PC-3 (cell line): ENCODE measurements at regions of chr20 and their contacts with region 1.

Region 1: GRCh38 chr20:8043687-8044282 is 24.2 kb upstream of the TMX4 start:
- DNase-seq: peak; percentile 88
- ATAC-seq: peak; percentile 81
- H3K4me3 ChIP-seq: no peak overlapping the region
- H3K27ac ChIP-seq: no peak overlapping the region
- H3K4me1 ChIP-seq: peaks cover 11% of the 10 kb centered on the region; the same call in 1 of the 2 replicates
- H3K27me3 ChIP-seq: peaks cover 35% of the 10 kb centered on the region
- CTCF ChIP-seq: peak; percentile 80

Region 2: GRCh38 chr20:7935027-7935551 is 108.7 kb before region 1 on chr20:
- CTCF ChIA-PET with region 1: interaction called, 4 read pairs
- POLR2A ChIA-PET with region 1: no interaction called
- intact Hi-C with region 1: loop called (anchors 5 kb)
- DNase-seq: no peak
- ATAC-seq: no peak
- H3K4me3 ChIP-seq: no peak overlapping the region
- H3K27ac ChIP-seq: no peak overlapping the region
- H3K4me1 ChIP-seq: peaks cover 7% of the 10 kb centered on the region
- H3K27me3 ChIP-seq: peaks cover 3% of the 10 kb centered on the region; the same call in 1 of the 2 replicates
- CTCF ChIP-seq: no peak

Region 3: GRCh38 chr20:8131598-8132483 is 88.1 kb after region 1 on chr20 and contains the start of gene PLCB1:
- CTCF ChIA-PET with region 1: interaction called, 4 read pairs
- POLR2A ChIA-PET with region 1: no interaction called
- intact Hi-C with region 1: loop called (anchors 1 kb)
- DNase-seq: peak; percentile 72
- ATAC-seq: peak; percentile 92
- H3K4me3 ChIP-seq: peak within 1 kb of the TSS; percentile 56
- H3K27ac ChIP-seq: no peak within 1 kb of the TSS
- H3K4me1 ChIP-seq: peaks cover 7% of the 10 kb centered on the region; the same call in 1 of the 2 replicates
- H3K27me3 ChIP-seq: peaks cover 79% of the 10 kb centered on the region
- CTCF ChIP-seq: peak; percentile 74
- total RNA-seq, gene PLCB1: 4.4 TPM in 2 replicates

Region 4: DNA sequence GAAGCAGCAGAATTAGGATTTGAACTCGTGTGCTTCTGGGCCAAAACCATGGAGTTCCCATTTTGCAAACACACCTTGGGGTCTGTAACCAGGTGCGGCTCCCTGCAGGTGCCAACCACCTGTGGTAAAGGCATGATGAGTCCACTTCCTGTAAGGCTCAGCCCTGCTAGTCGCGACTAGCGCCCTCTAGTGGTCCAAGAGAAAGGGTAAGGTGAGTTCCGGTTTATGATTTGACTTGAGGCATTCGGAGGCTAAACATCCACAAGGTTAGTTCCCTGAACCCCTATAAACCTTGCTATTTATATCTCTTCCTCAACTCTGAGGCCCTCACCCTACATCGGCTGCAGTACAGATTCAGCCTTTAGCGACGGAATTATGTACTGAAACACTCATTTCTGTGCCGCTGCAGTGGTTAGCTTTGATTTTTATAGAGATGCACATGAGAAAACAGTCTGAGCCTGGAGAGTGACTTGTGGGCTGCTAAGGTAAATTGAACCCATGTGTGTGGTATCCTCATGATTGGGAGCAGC is 261.7 kb after region 1 on chr20:
- CTCF ChIA-PET with region 1: no interaction called
- POLR2A ChIA-PET with region 1: no interaction called
- intact Hi-C with region 1: loop called (anchors 10 kb)
- DNase-seq: peak; percentile 81
- ATAC-seq: peak; percentile 61; the same call in 1 of the 2 replicates
- H3K4me3 ChIP-seq: no peak overlapping the region
- H3K27ac ChIP-seq: no peak overlapping the region
- H3K4me1 ChIP-seq: no peaks in the 10 kb centered on the region
- H3K27me3 ChIP-seq: peaks cover 47% of the 10 kb centered on the region; the same call in 1 of the 2 replicates
- CTCF ChIP-seq: peak; percentile 92

Region 5: GRCh38 chr20:8389381-8390036 is 345.7 kb after region 1 on chr20:
- CTCF ChIA-PET with region 1: no interaction called
- POLR2A ChIA-PET with region 1: no interaction called
- intact Hi-C with region 1: loop called (anchors 1 kb)
- DNase-seq: peak; percentile 72
- ATAC-seq: peak; percentile 29; the same call in 1 of the 2 replicates
- H3K4me3 ChIP-seq: no peak overlapping the region
- H3K27ac ChIP-seq: no peak overlapping the region
- H3K4me1 ChIP-seq: no peaks in the 10 kb centered on the region
- H3K27me3 ChIP-seq: no peaks in the 10 kb centered on the region
- CTCF ChIP-seq: peak; percentile 74

Region 6: DNA sequence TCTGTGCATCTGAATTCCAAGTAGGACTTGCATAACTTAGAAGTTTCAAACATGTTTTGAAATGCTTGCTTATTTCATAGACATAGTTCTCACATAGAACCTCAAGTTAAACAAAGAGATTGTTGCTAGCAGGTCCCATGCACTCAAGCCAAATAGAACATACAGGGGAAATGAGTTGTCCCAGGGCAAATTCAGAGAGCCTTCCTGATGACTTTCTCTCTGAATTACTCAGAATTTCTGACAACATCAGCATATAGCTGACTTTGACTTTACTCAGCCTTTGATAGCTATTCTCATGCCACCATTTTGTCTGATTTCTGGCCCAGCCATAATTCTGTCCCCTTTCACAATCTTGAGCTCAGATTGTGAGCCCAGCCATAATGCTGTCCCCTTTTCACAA is 691.9 kb after region 1 on chr20:
- CTCF ChIA-PET with region 1: no interaction called
- POLR2A ChIA-PET with region 1: interaction called, 12 read pairs
- intact Hi-C with region 1: no loop called
- DNase-seq: no peak
- ATAC-seq: no peak
- H3K4me3 ChIP-seq: no peak overlapping the region
- H3K27ac ChIP-seq: no peak overlapping the region
- H3K4me1 ChIP-seq: no peaks in the 10 kb centered on the region
- H3K27me3 ChIP-seq: 0 out of 2 replicates have a peak, but pooled peaks cover 3% of the 10 kb centered on the region
- CTCF ChIP-seq: no peak